ENCODE measurements at regions of chr13 and their contacts with region 1.

Region 1: DNA sequence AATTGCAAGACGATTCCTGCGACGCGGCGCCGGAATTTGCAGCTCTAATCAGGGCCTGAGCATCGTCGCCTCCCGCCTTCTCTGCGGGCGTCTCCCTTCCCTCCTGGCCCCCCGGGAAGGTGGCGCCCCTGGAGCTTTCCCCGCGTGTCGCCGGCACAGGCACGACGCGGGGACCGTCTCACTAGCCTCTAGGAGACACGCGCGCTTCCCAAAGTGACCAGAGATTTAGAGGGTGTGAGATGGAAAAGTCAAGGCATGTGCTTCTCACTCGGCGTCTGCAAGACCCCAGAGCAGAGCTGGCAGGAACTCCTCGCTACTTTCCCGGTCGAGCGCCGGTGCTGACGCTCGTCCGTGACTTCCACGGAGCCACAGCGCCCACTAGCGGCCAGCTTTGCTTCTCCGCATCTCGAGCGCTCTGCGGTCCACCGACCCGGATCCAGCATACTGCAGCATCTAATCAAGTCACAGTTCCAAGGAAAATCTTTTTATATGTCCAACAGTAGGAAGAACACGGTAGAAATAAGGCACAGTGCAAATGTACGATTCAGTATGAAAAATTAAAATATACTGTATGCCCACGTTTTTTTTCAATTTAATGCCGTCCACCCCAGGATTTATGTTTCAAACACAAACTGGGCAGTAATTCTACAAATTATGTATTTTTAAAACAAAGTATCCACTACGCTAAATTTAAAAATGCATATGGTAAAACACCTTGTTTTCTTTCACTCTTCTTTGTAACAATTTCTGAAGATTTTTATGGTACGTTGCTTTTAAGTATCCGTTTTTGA is 977 bp upstream of the EFNB2 start:
- DNase-seq: peak; percentile 63 to 90 (median 83)
- ATAC-seq: peak; percentile 66
- H3K4me3 ChIP-seq: peak overlapping the region; percentile 78
- H3K4me3 Mint-ChIP-seq: peak overlapping the region; percentile 87 to 98 (median 95)
- H3K27ac ChIP-seq: peak overlapping the region; percentile 12
- H3K27ac Mint-ChIP-seq: peak overlapping the region in 7 of 9 donors; percentile 52 to 86 (median 77)
- H3K4me1 ChIP-seq: peaks cover 5 to 19% of the 10 kb centered on the region in 2 donors
- H3K4me1 Mint-ChIP-seq: peaks cover 10 to 24% (median 19%) of the 10 kb centered on the region in 7 donors
- H3K27me3 ChIP-seq: no peaks in the 10 kb centered on the region
- H3K27me3 Mint-ChIP-seq: peaks cover 20 to 33% (median 24%) of the 10 kb centered on the region in 5 donors

Region 2: GRCh38 chr13:104773775-104774174 is 1762.7 kb before region 1 on chr13:
- CTCF ChIA-PET with region 1: no interaction called
- POLR2A ChIA-PET with region 1: no interaction called
- intact Hi-C with region 1: loop called (anchors 2 to 5 kb)
- DNase-seq: peak in 5 of 9 donors; percentile 4 to 42 (median 10)
- ATAC-seq: no peak
- H3K4me3 ChIP-seq: no peak overlapping the region
- H3K4me3 Mint-ChIP-seq: no peak overlapping the region
- H3K27ac ChIP-seq: no peak overlapping the region
- H3K27ac Mint-ChIP-seq: no peak overlapping the region
- H3K4me1 ChIP-seq: no peaks in the 10 kb centered on the region
- H3K4me1 Mint-ChIP-seq: peaks cover 0 to 12% (median 2%) of the 10 kb centered on the region in 7 donors
- H3K27me3 ChIP-seq: no peaks in the 10 kb centered on the region
- H3K27me3 Mint-ChIP-seq: peaks cover 0 to 6% (median 0%) of the 10 kb centered on the region in 5 donors

Region 3: GRCh38 chr13:105410602-105411001 is 1125.8 kb before region 1 on chr13:
- CTCF ChIA-PET with region 1: interaction called, 8 read pairs
- POLR2A ChIA-PET with region 1: no interaction called
- intact Hi-C with region 1: loop called in 1 of 2 experiments (anchors 2 kb)
- DNase-seq: peak in 2 of 9 donors; percentile 9 to 25
- ATAC-seq: no peak
- H3K4me3 ChIP-seq: no peak overlapping the region
- H3K4me3 Mint-ChIP-seq: no peak overlapping the region
- H3K27ac ChIP-seq: no peak overlapping the region
- H3K27ac Mint-ChIP-seq: no peak overlapping the region
- H3K4me1 ChIP-seq: no peaks in the 10 kb centered on the region
- H3K4me1 Mint-ChIP-seq: no peaks in the 10 kb centered on the region
- H3K27me3 ChIP-seq: no peaks in the 10 kb centered on the region
- H3K27me3 Mint-ChIP-seq: no peaks in the 10 kb centered on the region

Region 4: GRCh38 chr13:105692769-105693168 is 843.7 kb before region 1 on chr13:
- CTCF ChIA-PET with region 1: no interaction called
- POLR2A ChIA-PET with region 1: no interaction called
- intact Hi-C with region 1: no loop called
- DNase-seq: no peak
- ATAC-seq: no peak
- H3K4me3 ChIP-seq: no peak overlapping the region
- H3K4me3 Mint-ChIP-seq: no peak overlapping the region
- H3K27ac ChIP-seq: no peak overlapping the region
- H3K27ac Mint-ChIP-seq: no peak overlapping the region
- H3K4me1 ChIP-seq: no peaks in the 10 kb centered on the region
- H3K4me1 Mint-ChIP-seq: no peaks in the 10 kb centered on the region
- H3K27me3 ChIP-seq: no peaks in the 10 kb centered on the region
- H3K27me3 Mint-ChIP-seq: no peaks in the 10 kb centered on the region

Region 5: DNA sequence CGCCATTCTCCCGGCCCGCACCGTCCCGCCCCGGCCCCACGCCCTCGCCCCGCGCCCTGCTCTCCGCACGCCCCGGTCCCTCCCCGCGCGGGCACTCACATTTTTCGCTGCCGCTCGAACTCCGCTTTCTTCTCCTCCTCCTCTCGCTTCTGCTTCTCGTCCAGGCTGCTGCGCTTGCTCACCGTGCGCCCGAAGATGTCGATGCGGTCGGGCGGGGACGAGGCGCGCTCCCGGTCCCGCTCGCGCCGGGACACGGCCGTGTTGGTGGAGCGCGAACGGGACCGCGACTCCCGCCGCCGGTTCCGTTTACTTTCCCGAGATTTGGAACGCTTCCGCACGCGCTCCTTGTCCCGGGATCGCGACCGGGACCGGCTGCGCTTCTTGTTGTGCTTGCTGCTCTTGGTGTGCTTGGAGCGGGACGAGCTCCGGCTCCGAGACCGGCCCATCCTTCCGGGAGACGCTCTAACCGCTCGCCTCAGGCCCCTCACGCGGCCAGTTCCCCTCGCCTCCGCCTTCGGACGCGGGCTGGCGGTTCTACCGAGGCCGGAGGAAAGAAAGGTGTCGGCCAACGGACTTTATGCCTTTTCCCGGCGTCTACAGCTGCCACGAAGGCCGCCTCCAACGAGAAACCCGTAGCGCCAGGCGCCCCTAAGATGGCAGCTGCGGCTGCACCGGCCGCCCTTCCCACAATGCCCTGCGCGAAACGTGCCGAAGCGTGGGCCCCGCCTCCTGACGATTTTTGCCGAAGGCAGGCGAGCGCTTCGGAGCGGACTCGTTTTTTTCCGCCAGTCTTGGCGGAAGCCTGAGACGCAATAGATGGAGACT is 31.2 kb after region 1 on chr13 and contains the start of gene ARGLU1:
- CTCF ChIA-PET with region 1: interaction called, 9 read pairs
- POLR2A ChIA-PET with region 1: interaction called, 17 read pairs
- intact Hi-C with region 1: loop called (anchors 1 kb)
- DNase-seq: peak; percentile 88 to 98 (median 97)
- ATAC-seq: peak; percentile 92
- H3K4me3 ChIP-seq: peak within 1 kb of the TSS; percentile 70
- H3K4me3 Mint-ChIP-seq: peak within 1 kb of the TSS; percentile 83 to 100 (median 98)
- H3K27ac ChIP-seq: peak within 1 kb of the TSS; percentile 95
- H3K27ac Mint-ChIP-seq: peak within 1 kb of the TSS; percentile 90 to 97 (median 95)
- H3K4me1 ChIP-seq: peaks cover 34 to 35% of the 10 kb centered on the region in 2 donors
- H3K4me1 Mint-ChIP-seq: peaks cover 39 to 66% (median 53%) of the 10 kb centered on the region in 7 donors
- H3K27me3 ChIP-seq: no peaks in the 10 kb centered on the region
- H3K27me3 Mint-ChIP-seq: no peaks in the 10 kb centered on the region
- total RNA-seq, gene ARGLU1: 93.3 to 291 (median 160) TPM

Region 6: GRCh38 chr13:106581225-106581624 is 44.8 kb after region 1 on chr13:
- CTCF ChIA-PET with region 1: no interaction called
- POLR2A ChIA-PET with region 1: no interaction called
- intact Hi-C with region 1: no loop called
- DNase-seq: no peak
- ATAC-seq: no peak
- H3K4me3 ChIP-seq: no peak overlapping the region
- H3K4me3 Mint-ChIP-seq: no peak overlapping the region
- H3K27ac ChIP-seq: no peak overlapping the region
- H3K27ac Mint-ChIP-seq: no peak overlapping the region
- H3K4me1 ChIP-seq: no peaks in the 10 kb centered on the region
- H3K4me1 Mint-ChIP-seq: no peaks in the 10 kb centered on the region
- H3K27me3 ChIP-seq: no peaks in the 10 kb centered on the region
- H3K27me3 Mint-ChIP-seq: peaks cover 0 to 8% (median 0%) of the 10 kb centered on the region in 5 donors

Region 7: GRCh38 chr13:106917673-106918556 is 381.5 kb after region 1 on chr13:
- CTCF ChIA-PET with region 1: no interaction called
- POLR2A ChIA-PET with region 1: no interaction called
- intact Hi-C with region 1: loop called (anchors 2 to 5 kb)
- DNase-seq: peak; percentile 29 to 79 (median 61)
- ATAC-seq: peak; percentile 91
- H3K4me3 ChIP-seq: peak overlapping the region; percentile 73
- H3K4me3 Mint-ChIP-seq: peak overlapping the region; percentile 68 to 86 (median 77)
- H3K27ac ChIP-seq: no peak overlapping the region
- H3K27ac Mint-ChIP-seq: peak overlapping the region in 5 of 9 donors; percentile 31 to 67 (median 55)
- H3K4me1 ChIP-seq: peaks cover 0 to 6% of the 10 kb centered on the region in 2 donors
- H3K4me1 Mint-ChIP-seq: peaks cover 0 to 21% (median 8%) of the 10 kb centered on the region in 7 donors
- H3K27me3 ChIP-seq: no peaks in the 10 kb centered on the region
- H3K27me3 Mint-ChIP-seq: peaks cover 25 to 37% (median 36%) of the 10 kb centered on the region in 5 donors

Measured in naive thymus-derived CD4-positive, alpha-beta T cell (primary cell).